A673 (cell line): ENCODE measurements at regions of chr7 and their contacts with region 1.

Region 1: GRCh38 chr7:134690016-134690415 is 43.4 kb downstream of the BPGM start:
- DNase-seq: peak; percentile 50
- H3K4me3 ChIP-seq: no peak overlapping the region
- H3K27ac ChIP-seq: no peak overlapping the region
- H3K4me1 ChIP-seq: peaks cover 6% of the 10 kb centered on the region
- H3K27me3 ChIP-seq: no peaks in the 10 kb centered on the region
- CTCF ChIP-seq: peak; percentile 57

Region 2: DNA sequence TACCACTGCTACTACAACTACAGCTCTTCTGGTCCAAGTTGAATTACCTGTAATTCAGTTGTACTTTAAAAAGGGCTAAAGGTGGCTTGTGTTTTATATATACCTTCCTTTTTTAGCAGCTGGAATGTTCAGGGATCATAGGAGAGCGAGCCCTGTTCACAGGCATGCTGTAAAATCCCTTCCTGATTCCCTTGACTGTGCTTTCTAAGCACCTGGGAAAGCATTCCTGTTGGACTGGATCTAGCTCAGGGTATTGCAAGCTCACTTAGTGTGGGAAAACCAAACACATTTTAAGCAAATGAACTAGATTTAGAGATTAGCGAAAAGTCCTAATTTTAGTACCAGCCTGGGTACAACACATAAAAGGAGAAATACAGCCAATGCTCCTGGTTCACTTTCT is 11.9 kb before region 1 on chr7:
- CTCF ChIA-PET with region 1: interaction called, 17 read pairs
- POLR2A ChIA-PET with region 1: no interaction called
- intact Hi-C with region 1: no loop called
- DNase-seq: no peak
- H3K4me3 ChIP-seq: no peak overlapping the region
- H3K27ac ChIP-seq: no peak overlapping the region
- H3K4me1 ChIP-seq: no peaks in the 10 kb centered on the region
- H3K27me3 ChIP-seq: no peaks in the 10 kb centered on the region
- CTCF ChIP-seq: no peak

Region 3: DNA sequence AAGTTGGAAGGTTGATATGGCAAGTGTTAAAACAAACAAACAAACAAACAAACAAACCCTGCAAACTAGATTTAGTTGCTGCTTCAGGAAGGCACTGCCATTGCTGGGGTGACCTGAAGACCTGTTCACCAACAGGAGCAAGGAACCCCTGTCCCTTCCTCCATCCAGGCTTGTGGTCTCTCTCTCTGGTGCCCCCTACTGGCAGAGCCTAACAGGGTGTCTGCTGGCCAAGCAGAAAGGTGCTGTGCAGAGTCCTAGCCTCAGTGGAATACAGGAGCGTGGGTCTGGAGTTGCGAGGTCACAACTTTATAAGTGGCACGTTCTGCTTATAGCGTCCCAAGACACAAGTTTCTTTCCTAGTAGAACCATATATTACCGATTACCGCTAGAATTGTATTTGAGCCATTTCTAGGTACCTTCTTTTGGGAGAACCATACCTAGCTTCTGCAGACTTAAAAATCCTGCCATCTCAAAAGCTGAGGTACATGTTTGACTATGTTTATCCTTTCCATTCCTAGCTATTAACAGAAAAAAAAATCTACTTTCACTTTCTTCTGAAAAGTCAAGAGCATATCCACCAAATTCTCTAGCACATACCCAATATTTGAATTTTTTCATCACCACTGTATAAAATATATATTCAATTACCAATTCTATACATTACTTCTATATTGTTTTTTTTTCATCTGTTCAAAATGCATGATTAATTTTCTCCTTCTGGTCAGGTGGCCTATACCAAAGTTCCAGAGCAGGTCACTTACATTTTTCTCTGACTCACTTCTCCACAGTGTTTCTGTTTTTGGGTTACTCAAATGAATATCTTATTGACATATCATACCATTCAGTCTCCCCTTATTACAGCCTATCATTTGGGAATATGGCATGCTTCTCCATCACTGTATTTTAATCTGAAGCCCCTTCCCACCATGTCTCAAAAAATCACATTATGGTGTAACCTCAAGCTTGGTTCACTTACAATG is 60.4 kb after region 1 on chr7:
- CTCF ChIA-PET with region 1: interaction called, 17 read pairs
- POLR2A ChIA-PET with region 1: no interaction called
- intact Hi-C with region 1: no loop called
- DNase-seq: peak; percentile 57
- H3K4me3 ChIP-seq: no peak overlapping the region
- H3K27ac ChIP-seq: no peak overlapping the region
- H3K4me1 ChIP-seq: peaks cover 5% of the 10 kb centered on the region
- H3K27me3 ChIP-seq: no peaks in the 10 kb centered on the region
- CTCF ChIP-seq: peak; percentile 89

Region 4: DNA sequence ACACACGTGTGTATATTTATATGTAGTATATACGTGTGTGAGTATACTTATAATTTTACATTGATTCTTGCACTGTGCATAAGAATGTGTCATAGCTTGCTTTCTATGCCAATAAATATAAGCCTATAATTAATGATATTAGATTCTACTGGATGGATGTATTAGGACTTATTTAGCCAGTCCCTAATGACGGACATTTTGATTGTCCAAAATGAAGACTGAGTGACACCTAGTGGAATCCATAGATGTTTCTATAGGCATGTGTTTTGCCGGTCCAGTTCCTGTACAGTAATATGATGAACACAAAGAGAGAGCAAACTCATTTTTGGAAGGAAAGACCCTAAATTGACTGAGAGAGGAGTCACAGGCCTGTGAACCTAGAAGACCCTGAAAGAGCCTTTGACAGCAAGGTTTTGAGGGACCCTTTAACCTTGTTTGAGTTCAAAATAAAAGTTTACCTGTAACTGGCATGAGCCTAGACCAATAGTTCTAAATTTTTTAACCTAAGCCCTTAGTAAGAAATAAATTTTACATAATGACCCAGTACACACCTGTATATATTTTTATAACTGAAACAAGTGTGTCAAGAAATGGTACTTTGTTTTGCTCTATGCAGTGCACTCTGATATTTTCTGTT is 253.9 kb after region 1 on chr7:
- CTCF ChIA-PET with region 1: no interaction called
- POLR2A ChIA-PET with region 1: no interaction called
- intact Hi-C with region 1: loop called (anchors 2 kb)
- DNase-seq: peak; percentile 68
- H3K4me3 ChIP-seq: no peak overlapping the region
- H3K27ac ChIP-seq: no peak overlapping the region
- H3K4me1 ChIP-seq: peaks cover 4% of the 10 kb centered on the region
- H3K27me3 ChIP-seq: no peaks in the 10 kb centered on the region
- CTCF ChIP-seq: peak; percentile 64

Region 5: GRCh38 chr7:134954197-134955082 is 264.4 kb after region 1 on chr7:
- CTCF ChIA-PET with region 1: interaction called, 5 read pairs
- POLR2A ChIA-PET with region 1: no interaction called
- intact Hi-C with region 1: loop called (anchors 2 kb)
- DNase-seq: peak; percentile 59
- H3K4me3 ChIP-seq: no peak overlapping the region
- H3K27ac ChIP-seq: no peak overlapping the region
- H3K4me1 ChIP-seq: no peaks in the 10 kb centered on the region
- H3K27me3 ChIP-seq: no peaks in the 10 kb centered on the region
- CTCF ChIP-seq: peak; percentile 75

Region 6: DNA sequence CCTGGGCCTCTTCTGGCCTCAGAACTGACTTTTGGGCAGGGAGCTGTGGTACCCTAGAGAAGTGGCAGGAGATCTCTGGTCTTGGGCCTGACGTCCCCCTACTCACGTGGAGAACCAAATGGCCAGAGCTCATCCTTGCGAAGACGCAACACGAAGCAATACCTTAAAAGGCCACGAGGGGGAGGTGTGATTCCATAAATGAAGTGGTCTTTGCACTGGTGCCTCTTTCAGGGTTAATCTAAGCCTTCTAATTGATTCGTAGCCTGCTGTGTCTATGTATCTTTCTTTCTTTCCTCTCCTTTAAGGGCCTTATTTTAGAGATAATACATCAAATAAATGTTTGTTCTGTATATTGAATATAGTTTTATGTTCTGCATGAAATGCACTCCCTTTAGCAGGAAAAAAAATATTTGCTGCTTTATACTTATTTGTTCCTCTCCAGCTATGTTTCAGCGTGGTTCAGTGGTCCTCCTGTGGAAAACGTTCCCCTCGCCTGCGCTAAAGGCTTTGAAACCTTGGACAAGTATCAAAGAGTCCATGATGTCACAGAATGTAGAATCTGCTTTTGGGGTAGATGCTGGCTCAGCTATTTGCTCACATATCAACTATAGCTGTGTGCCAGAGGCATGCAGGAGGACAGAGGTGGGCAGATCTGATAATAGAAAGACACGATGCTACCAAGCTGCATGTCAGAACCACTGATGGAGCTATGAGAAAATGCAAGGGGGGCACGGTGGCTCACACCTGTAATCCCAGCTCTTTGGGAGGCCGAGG is 584.7 kb after region 1 on chr7:
- CTCF ChIA-PET with region 1: no interaction called
- POLR2A ChIA-PET with region 1: no interaction called
- intact Hi-C with region 1: loop called (anchors 5 kb)
- DNase-seq: peak; percentile 88
- H3K4me3 ChIP-seq: no peak overlapping the region
- H3K27ac ChIP-seq: no peak overlapping the region
- H3K4me1 ChIP-seq: no peaks in the 10 kb centered on the region
- H3K27me3 ChIP-seq: no peaks in the 10 kb centered on the region
- CTCF ChIP-seq: peak; percentile 87